ENCODE measurements at regions of chr11 and their contacts with region 1.

Region 1: DNA sequence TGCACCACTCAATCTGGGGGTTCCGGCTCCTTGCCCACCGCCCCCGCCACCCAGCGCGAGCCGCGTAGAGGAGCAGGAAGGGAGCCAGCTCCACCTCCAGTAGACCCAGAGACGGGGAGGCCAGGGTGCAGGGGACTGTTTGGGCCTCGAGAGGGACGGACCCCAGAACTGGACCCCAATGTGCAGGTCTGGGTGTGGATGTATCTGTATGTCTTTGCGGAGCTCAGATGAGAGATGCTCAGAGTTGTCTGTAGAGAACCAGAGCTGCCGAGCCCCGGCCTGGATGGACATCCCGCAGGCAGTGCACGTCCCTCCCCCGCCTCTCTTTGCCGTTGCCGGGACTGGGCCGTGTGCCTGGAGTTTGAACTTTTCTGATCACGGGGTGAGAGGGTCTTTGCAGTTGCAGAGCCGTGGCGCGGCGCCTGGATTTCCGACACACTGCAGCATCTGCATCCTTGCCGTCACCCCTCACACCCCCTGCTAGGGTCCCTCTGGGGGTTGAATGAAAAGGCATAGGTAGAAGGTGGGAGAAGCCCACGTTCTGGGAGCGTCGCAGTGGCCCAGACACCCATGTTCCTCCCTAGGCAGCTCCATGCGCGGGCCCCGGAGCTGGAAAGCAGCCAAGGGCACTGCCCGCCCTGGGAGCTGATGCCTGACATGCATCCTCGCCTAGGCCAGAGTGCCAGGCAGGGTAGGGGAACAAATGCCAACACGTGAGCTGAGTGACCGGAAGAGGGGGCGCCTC is 105.2 kb downstream of the KCNQ1 start:
- DNase-seq: peak in 1 of 2 donors; percentile 62
- ATAC-seq: peak in 7 of 8 donors; percentile 49 to 92 (median 82)
- H3K4me3 ChIP-seq: no peak overlapping the region
- H3K27ac ChIP-seq: no peak overlapping the region
- H3K4me1 ChIP-seq: peaks cover 0 to 18% (median 0%) of the 10 kb centered on the region in 9 donors
- H3K27me3 ChIP-seq: no peaks in the 10 kb centered on the region
- CTCF ChIP-seq: no peak

Region 2: DNA sequence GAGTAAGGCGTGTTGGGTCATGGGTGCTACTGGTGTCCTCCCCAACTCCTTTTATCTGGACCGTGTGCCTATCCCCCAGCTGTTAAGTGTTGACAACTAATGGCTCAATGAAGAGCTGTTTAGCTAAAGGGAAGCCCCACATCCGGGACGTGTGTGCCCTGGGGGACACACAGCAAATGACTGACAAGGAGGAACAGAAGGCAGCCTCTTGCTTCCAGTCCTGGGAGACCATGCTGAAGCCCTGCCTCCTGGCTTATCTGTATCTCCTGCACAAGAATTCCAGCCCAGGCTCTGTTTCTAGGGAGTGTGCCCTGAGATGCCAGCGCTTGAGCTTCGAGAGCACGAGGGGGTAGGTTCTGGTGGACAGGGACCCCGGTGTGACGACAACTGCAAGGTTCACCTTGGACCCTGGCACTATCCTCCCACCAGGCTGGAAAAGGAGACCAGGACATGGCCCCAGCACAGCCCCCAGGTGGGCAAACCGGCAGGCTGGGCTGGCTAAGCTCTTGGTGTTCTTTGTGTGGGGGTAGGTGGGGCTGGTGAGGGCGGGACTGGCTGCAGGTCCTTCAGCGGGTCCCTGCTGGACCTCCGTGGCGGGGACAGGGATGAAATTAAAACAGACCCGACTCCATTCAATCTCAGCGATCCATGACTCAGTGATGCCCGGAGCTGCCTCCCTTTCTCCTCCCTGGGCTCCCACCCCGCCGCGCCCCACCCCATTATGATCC is 300.7 kb before region 1 on chr11:
- intact Hi-C with region 1: no loop called
- DNase-seq: no peak
- ATAC-seq: no peak
- H3K4me3 ChIP-seq: no peak overlapping the region
- H3K27ac ChIP-seq: no peak overlapping the region
- H3K4me1 ChIP-seq: no peaks in the 10 kb centered on the region
- H3K27me3 ChIP-seq: peaks cover 0 to 22% (median 6%) of the 10 kb centered on the region in 7 donors
- CTCF ChIP-seq: no peak

Region 3: GRCh38 chr11:2675540-2675939 is 125.5 kb after region 1 on chr11:
- intact Hi-C with region 1: loop called in 1 of 10 experiments (anchors 10 kb)
- DNase-seq: no peak
- ATAC-seq: peak in 7 of 8 donors; percentile 24 to 37 (median 31)
- H3K4me3 ChIP-seq: no peak overlapping the region
- H3K27ac ChIP-seq: no peak overlapping the region
- H3K4me1 ChIP-seq: peaks cover 0 to 43% (median 27%) of the 10 kb centered on the region in 9 donors
- H3K27me3 ChIP-seq: no peaks in the 10 kb centered on the region
- CTCF ChIP-seq: no peak

Region 4: DNA sequence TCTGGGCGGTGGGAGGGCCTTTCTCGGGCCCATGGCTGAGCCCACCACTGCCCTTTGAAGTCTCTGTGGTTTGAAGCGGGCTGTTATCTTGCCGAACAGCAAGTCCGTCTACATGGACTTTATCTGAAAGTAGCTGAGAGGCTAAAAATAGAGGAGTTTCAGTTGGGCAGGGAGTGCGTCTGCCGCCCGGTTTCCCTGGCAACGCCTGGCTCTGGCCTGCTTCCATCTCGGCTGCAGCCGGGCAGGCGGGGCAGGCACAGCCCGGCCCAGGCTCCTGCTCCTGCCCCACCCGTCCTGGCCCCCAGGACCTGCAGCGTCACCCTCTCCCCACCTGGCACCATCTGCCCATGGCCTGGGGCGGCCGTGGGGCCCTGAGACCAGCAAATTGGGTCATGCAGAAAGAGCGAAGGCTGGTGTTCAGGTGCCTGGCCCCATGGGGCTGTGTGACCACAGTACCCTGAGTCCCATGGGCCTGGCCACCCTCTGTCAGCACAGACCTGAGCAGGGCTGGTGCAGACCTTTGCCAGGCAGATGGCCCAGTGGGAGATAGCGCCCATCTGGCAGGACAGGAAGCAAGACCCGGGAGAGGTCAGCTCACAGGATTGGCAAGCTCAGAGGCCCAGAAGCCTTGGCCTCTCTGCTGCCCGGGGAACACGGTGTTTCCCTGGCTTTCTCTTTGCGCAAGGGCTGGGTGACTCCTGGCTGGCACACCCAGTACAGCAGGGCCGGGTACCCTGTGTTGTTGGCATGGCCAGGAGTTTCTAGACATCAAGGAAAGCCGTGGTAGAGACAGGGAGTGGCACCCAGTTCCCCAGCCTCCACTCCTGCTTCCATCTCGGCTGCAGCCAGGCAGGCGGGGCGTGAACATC is 228.8 kb after region 1 on chr11:
- intact Hi-C with region 1: loop called in 1 of 10 experiments (anchors 10 kb)
- DNase-seq: peak; percentile 76 to 85
- ATAC-seq: peak; percentile 86 to 93 (median 91)
- H3K4me3 ChIP-seq: peak overlapping the region in 6 of 10 donors; percentile 0 to 27 (median 17)
- H3K27ac ChIP-seq: peak overlapping the region; percentile 60 to 94 (median 80)
- H3K4me1 ChIP-seq: peaks cover 30 to 49% (median 43%) of the 10 kb centered on the region in 9 donors
- H3K27me3 ChIP-seq: no peaks in the 10 kb centered on the region
- CTCF ChIP-seq: peak in 6 of 9 donors; percentile 15 to 58 (median 43)

Measured in heart right ventricle (tissue), 16 donors.